AG04450 (cell line): ENCODE measurements at regions of chr11 and their contacts with region 1.

Region 1: DNA sequence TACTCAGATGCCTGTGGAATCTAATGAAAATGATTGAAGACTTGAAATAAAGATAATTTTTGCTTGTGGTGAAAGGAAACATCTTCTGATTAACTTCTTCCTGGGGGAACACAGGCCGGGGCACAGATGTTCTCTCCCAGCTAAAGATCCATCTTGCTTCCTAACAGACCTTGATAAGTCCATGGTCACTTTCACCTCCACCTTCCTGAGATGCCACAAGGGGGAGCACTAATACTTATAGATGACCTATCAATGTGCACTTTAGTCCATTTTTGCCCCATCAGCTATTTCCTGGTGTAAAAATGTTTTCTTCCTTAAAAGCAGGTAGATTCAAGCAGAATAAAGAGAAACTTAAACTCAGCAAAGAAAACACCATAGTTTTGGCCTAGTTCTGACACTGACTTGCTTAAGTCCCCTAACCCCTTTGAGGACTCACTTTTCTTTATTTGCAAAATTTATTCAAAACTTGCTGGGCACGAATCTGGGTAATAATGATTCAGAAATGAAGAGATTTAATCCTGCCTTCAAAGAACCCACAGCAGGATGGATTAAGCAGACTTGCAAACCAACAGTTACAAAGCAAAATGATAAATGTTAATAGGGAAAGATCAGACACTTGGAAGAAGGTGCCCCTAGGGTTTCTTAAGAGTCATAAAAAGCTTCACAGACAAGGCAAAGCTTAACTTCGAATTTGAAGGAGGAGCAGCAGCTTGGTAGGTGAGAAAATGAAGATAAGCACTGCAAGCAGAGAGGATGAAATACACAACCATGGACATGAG is 158.7 kb downstream of the RAB38 start:
- DNase-seq: peak; percentile 72
- H3K4me3 ChIP-seq: no peak overlapping the region
- H3K27ac ChIP-seq: no peak overlapping the region
- H3K27me3 ChIP-seq: no peaks in the 10 kb centered on the region
- CTCF ChIP-seq: peak; percentile 81

Region 2: DNA sequence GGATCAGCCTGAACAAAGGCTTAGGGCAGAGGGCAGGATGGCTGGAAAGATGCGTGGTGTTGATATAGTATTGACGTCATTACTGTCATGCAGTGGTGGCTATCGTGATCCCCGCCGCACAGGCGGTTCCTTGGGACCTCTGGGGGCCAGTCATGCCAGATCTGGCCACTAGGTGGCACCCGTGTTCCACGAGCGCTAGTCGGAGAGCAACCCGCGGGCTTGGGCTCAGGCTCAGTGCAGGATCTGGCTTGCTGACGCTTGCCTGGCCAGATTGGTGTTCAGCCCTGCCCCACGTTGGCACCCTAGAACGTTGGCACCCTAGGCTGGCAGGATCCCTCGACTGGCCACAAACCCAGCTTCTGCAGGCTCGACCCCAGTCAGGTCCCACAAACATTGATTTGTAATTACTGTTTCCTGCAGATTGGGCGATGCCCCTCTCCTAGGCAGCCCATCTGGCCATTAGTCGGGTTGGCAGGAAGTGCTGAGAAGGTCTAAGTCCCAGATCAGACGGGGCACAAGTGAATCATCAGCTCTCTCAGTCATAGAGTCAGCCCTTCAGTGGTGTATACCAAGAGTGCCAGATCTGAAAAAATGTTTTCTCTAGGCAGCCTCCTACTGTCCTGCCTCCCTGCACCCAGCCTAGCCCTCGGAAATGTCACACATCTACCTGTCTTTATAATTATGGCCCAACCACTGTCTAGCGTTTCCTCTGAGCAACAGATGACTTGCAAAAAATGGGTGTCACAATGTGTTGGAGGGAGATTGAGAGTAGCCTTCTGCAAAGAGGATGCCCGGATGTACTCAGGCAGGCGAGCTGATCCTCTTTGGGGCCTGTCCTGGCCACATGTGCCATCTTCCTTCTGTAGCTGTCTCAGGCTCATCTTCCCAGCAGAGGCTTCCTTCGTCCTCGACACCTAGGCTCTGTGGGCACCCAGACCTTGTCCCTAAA is 663.5 kb before region 1 on chr11:
- CTCF ChIA-PET with region 1: interaction called, 14 read pairs
- POLR2A ChIA-PET with region 1: no interaction called
- DNase-seq: peak; percentile 32
- H3K4me3 ChIP-seq: no peak overlapping the region
- H3K27ac ChIP-seq: no peak overlapping the region
- H3K27me3 ChIP-seq: peaks cover 2% of the 10 kb centered on the region
- CTCF ChIP-seq: peak; percentile 99

Region 3: DNA sequence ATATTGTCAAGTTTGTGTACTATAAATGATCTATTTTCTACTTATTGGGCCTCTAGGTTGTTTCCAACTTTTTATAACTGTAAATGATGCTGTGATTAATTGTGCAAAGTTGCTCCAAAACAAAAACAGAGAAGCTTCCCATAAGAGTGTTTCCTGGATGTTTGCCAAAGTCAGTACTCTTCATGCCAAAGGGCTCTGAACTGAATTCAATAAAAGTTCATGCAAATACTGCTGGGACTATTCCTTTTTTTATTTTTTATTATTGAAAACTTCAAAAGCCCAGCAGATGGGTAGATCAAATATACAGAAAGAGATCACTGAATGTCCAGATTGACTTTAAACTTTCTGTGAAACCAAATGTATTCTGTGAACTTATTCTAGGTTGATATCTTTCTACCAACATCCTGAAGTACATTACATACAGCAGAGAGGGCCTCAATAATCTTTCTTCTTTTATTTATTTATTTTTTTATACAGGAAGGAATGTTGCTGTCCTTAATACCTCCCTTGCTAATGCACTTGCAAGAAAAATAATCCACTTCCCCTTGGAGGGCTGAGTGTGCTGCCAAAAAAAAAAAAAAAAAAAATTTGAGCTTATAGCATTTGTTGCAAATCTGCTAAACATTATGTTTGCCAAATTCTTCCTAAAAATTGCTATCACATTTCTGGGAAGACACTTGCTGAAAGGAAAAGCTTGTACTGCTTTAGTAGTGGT is 267.9 kb after region 1 on chr11:
- CTCF ChIA-PET with region 1: interaction called, 10 read pairs
- POLR2A ChIA-PET with region 1: no interaction called
- DNase-seq: no peak
- H3K4me3 ChIP-seq: no peak overlapping the region
- H3K27ac ChIP-seq: no peak overlapping the region
- H3K27me3 ChIP-seq: no peaks in the 10 kb centered on the region
- CTCF ChIP-seq: no peak